Activated CD8-positive, alpha-beta T cell treated with anti-CD3 and anti-CD28 coated beads, Interleukin-2, amount 10 ng/mL, durations not matched to agents 7 days and 5 days (primary cell): ENCODE measurements at regions of chr5 and their contacts with region 1.

Region 1: GRCh38 chr5:160021831-160022446 is 13.0 kb downstream of the TTC1 start:
- DNase-seq: peak; percentile 75
- ATAC-seq: peak; percentile 86
- H3K4me3 Mint-ChIP-seq: no peak overlapping the region
- H3K27ac Mint-ChIP-seq: no peak overlapping the region
- H3K4me1 Mint-ChIP-seq: peaks cover 20% of the 10 kb centered on the region
- H3K27me3 Mint-ChIP-seq: no peaks in the 10 kb centered on the region

Region 2: DNA sequence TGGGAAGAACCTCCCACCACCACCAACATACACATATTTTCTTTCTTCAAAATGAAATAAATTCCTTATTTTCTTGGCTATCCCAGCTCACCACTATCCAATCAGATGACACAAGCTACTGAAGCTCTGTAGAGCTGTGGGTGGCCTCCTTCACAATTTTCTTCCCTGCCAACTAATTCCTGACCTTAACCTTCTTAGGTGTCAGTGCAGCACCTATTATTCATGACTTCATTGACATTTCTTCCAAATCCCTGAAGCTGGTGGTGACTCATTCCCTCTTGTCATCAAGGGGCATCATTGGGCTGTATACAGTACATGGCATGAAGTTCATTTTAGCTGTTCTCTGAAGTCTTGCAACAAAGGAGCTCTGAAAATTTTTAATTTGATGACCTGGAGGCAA is 147.7 kb before region 1 on chr5:
- CTCF ChIA-PET with region 1: no interaction called
- POLR2A ChIA-PET with region 1: no interaction called
- DNase-seq: no peak
- ATAC-seq: no peak
- H3K4me3 Mint-ChIP-seq: no peak overlapping the region
- H3K27ac Mint-ChIP-seq: no peak overlapping the region
- H3K4me1 Mint-ChIP-seq: no peaks in the 10 kb centered on the region
- H3K27me3 Mint-ChIP-seq: peaks cover 9% of the 10 kb centered on the region

Region 3: GRCh38 chr5:159915904-159916840 is 105.8 kb before region 1 on chr5 and contains the start of gene ADRA1B:
- CTCF ChIA-PET with region 1: no interaction called
- POLR2A ChIA-PET with region 1: no interaction called
- DNase-seq: peak; percentile 44
- ATAC-seq: peak; percentile 90
- H3K4me3 Mint-ChIP-seq: no peak within 1 kb of the TSS
- H3K27ac Mint-ChIP-seq: no peak within 1 kb of the TSS
- H3K4me1 Mint-ChIP-seq: peaks cover 6% of the 10 kb centered on the region
- H3K27me3 Mint-ChIP-seq: peaks cover 40% of the 10 kb centered on the region
- total RNA-seq, gene ADRA1B: not detected

Region 4: DNA sequence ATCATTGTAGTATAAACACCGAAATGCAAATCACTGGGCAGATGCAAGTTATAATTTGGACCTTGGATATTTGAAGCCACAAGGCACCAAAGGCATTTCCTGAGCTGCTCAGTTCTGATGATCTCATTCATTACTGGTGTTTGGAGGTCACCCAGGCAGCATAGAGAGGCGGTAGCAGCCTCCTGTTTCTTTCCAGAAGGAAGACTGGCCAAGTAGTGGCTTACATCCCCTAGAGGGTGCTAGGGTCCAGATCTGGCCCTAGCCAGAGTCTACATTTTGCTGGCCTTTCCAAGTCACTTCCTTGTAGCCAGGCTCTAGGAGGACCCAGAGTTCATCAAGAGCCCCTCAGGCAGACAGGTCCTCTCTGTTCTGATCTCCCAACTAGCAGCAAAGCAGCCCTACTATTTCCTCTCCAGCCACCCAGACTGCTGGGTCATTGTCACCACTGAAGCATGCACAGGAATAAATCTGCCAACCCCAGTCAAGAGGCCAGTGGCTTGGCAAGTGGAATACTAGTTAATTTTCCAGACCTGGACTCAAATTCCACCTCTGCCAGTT is 46.4 kb before region 1 on chr5:
- CTCF ChIA-PET with region 1: no interaction called
- POLR2A ChIA-PET with region 1: no interaction called
- DNase-seq: no peak
- ATAC-seq: no peak
- H3K4me3 Mint-ChIP-seq: no peak overlapping the region
- H3K27ac Mint-ChIP-seq: no peak overlapping the region
- H3K4me1 Mint-ChIP-seq: peaks cover 9% of the 10 kb centered on the region
- H3K27me3 Mint-ChIP-seq: peaks cover 47% of the 10 kb centered on the region

Region 5: DNA sequence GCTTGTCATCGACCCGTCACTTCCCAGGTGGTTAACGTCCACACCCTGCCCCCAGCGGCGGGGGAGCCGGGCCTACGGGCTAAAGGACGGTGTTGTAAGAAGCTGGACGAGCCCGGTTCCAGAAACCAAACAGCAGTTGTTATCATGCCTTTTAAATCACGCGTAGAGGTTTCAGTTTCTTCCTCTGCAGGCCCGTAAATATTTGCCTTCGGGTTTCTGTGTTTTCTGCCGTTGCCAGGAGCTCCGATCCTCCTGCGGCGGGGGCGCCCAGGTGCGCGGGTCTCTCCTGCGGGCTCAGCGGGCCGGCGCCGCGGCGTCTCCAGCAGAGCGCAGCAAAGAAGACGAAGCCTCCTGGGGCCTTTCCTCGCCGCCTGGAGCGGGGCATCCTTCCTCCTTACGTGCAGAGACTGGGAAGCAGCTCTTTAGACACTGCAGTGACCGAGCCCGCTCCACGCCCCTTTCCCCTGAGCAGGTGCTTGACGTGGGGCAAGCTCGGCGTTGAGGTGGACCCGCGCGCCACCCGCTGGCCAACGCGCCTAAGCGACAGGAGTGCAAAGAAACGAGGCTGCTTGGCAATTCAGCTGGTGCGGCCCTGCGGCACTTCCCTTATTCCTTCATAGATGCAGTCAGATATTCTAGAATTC is 34.8 kb before region 1 on chr5:
- CTCF ChIA-PET with region 1: interaction called, 18 read pairs
- POLR2A ChIA-PET with region 1: no interaction called
- DNase-seq: peak; percentile 80
- ATAC-seq: peak; percentile 98
- H3K4me3 Mint-ChIP-seq: peak overlapping the region; percentile 49
- H3K27ac Mint-ChIP-seq: no peak overlapping the region
- H3K4me1 Mint-ChIP-seq: peaks cover 5% of the 10 kb centered on the region
- H3K27me3 Mint-ChIP-seq: peaks cover 46% of the 10 kb centered on the region

Region 6: DNA sequence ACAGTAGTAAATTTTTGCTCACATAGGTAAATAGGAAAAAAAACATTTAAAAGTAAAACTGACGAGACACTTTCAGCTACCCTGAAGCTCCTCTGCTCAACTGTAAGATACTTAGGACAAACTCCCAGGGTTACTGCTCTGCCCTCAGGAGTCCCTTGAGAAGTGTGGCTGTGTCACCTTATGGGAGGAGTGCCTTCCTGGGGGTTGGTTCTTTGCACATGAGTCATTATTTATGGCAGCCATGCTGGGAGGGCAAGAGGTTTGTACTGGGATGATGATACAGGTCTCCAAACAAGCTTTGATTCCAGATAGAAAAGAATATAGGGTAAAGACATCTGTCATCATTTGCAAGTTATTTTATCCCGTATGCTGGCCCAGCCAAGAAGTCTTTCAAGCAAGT is 32.9 kb after region 1 on chr5:
- CTCF ChIA-PET with region 1: interaction called, 14 read pairs
- POLR2A ChIA-PET with region 1: no interaction called
- DNase-seq: no peak
- ATAC-seq: no peak
- H3K4me3 Mint-ChIP-seq: no peak overlapping the region
- H3K27ac Mint-ChIP-seq: no peak overlapping the region
- H3K4me1 Mint-ChIP-seq: no peaks in the 10 kb centered on the region
- H3K27me3 Mint-ChIP-seq: no peaks in the 10 kb centered on the region

Region 7: DNA sequence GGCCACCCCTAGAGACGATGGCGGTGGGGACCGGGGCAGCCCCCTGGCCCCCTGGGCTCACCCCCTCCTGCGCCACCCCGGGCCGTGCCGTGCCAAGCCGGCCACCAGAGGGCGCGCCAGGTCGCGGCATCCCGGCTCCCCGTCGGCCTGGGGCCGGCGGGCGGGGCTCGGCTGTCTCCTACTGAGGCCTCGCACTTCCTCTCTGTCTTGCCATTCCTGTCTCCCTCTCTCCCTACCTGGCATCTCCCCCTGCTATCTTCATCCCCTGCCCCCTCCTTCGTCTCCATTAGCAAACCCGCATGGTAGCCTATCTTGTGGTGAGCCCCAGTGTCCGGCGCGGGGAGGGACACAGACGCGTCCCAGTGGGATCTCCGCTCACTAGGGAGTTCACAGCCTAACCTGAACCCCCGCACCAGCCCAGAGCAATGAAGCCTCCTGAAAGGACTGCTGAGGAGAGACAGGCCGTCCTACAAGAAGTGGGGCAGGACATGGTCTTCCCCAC is 177.5 kb after region 1 on chr5:
- CTCF ChIA-PET with region 1: interaction called, 11 read pairs
- POLR2A ChIA-PET with region 1: no interaction called
- DNase-seq: peak; percentile 70
- ATAC-seq: peak; percentile 100
- H3K4me3 Mint-ChIP-seq: peak overlapping the region; percentile 58
- H3K27ac Mint-ChIP-seq: no peak overlapping the region
- H3K4me1 Mint-ChIP-seq: peaks cover 3% of the 10 kb centered on the region
- H3K27me3 Mint-ChIP-seq: no peaks in the 10 kb centered on the region

Region 8: DNA sequence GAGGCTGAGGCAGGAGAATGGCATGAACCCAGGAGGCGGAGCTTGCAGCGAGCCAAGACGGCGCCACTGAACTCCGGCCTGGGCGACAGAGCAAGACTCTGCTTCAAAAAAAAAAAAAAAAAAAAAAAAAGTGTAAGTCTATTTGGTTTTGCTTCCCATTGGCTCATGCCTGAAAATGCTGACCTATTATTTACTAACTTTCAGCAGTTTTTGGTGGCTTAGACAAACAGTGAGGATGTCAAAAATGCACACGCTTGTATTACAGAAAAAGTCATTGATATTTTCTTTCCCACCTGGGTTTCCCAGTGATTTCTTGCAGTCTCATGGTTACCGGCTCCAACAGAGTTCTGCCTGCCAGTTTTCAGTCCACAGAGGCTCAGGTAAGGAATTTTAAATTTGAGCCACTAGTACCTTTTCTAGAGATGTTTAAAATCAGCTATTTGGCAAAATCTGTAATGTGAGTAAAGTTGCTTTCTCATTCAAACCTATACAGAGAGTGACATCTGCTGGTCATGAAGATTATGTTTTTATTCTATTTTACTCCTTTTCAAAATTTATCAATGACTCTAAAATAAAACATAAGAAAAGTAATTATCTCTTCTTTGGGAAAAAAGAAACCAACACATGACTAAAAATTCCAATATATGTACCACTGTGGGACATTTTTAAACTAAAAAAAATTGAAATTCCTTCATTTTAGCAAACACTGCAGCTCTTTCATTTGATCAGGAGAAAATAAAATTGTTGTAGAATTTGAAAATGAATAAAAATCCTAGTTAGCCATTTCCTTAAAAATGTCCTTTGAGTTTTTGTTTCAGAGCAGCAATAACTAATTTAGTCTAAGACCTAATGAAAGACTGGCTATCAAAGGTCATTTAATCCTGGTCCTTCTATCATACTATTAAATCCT is 369.1 kb after region 1 on chr5:
- CTCF ChIA-PET with region 1: interaction called, 20 read pairs
- POLR2A ChIA-PET with region 1: no interaction called
- DNase-seq: no peak
- ATAC-seq: no peak
- H3K4me3 Mint-ChIP-seq: no peak overlapping the region
- H3K27ac Mint-ChIP-seq: no peak overlapping the region
- H3K4me1 Mint-ChIP-seq: no peaks in the 10 kb centered on the region
- H3K27me3 Mint-ChIP-seq: no peaks in the 10 kb centered on the region